ENCODE measurements at regions of chr1 and their contacts with region 1.

Region 1: DNA sequence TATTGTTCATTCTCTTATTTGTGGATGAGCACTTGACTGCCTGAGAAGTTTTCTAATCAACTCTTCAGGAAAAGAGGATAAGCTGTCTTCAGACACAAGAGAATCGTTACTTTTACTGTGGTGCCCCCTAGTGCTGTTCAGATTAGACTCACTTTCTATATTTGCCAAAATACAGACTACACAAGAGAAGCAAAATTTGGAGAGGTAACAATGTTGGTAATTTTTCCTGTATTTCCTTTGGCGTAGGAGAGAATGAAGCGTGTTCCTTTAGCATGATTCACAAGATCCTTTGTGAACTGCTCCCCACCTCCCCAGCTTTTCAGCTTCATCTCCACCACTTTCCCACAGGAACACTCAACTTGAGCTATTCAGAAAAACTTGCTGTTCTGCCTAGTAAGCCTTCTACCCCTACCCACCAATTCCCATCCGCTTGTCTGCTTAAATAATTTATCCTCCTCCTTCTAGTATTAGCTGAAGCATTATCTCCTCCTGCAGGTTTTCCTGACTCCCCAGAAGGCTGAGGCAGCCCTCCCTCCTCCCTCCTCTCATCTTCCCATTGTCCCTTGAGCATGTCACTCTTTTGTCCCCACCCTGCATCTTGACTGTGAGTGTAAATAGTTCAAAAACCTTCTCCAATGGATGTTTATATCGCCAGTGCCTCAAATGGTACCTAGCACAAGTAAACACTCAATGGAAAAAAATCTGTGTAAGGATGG is 4.5 kb downstream of the TNFSF4 start:
- DNase-seq: no peak
- H3K4me3 ChIP-seq: no peak overlapping the region
- H3K27ac ChIP-seq: no peak overlapping the region
- H3K4me1 ChIP-seq: peaks cover 0 to 14% (median 8%) of the 10 kb centered on the region in 4 donors
- H3K27me3 ChIP-seq: no peaks in the 10 kb centered on the region
- CTCF ChIP-seq: peak; percentile 67 to 78

Region 2: DNA sequence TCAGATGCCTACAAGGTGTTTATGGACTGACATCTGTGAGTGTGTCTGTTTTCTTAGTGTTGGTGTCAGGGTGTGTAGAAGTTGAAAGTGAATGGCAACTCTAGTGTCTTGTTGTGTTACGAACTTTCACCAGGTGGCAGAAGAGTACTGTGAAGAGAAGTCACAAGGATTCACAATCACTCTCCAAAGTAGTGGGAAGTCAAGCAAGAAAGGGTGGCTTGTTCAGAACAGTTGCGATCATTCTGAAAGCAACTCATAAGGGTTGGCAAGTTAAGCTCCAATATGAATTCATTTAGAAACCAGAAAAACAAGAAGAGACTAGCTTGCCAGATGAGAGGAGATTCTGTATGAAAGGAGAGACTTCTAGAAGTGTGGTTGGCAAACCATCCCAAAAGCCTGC is 457.6 kb before region 1 on chr1:
- intact Hi-C with region 1: loop called (anchors 5 kb)
- DNase-seq: no peak
- H3K4me3 ChIP-seq: no peak overlapping the region
- H3K27ac ChIP-seq: no peak overlapping the region
- H3K4me1 ChIP-seq: peaks cover 0 to 13% (median 5%) of the 10 kb centered on the region in 4 donors
- H3K27me3 ChIP-seq: peaks cover 0 to 11% of the 10 kb centered on the region in 2 donors
- CTCF ChIP-seq: peak; percentile 41 to 42

Region 3: DNA sequence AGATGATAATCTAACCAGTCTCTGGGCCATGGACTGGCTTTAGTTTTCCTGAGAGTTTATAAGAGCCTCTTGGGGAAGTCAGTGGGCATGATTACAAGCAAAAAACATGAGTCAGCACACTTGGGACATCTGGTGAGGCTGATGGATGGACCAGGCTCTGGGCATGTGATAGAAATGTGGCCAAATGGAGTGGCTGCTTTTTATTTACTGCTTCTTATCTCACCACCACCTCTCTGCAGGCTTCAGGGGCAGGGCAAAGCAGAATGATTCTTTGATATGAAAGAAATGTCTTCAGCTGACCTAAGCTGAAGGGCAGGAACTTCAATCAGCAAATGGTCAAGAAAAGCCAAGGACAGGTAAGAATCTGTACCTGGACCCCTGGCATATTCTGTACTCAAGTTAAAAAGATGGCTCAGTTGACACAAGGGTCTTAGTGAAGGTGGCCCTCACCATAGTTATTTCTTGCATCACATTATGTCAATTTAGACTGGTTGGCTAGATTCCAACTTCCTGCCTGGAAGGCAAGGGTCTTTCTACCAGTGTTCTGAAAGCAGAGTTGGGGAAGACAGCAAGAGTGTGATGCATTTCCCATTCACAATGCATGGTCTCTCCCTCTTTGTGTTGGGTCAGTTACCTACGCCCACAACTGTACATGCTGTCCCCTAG is 380.8 kb before region 1 on chr1:
- intact Hi-C with region 1: loop called (anchors 5 kb)
- DNase-seq: peak in 1 of 2 donors; percentile 37
- H3K4me3 ChIP-seq: no peak overlapping the region
- H3K27ac ChIP-seq: no peak overlapping the region
- H3K4me1 ChIP-seq: peaks cover 0 to 22% (median 13%) of the 10 kb centered on the region in 4 donors
- H3K27me3 ChIP-seq: no peaks in the 10 kb centered on the region
- CTCF ChIP-seq: no peak